ENCODE measurements at regions of chr11 and their contacts with region 1.

Region 1: DNA sequence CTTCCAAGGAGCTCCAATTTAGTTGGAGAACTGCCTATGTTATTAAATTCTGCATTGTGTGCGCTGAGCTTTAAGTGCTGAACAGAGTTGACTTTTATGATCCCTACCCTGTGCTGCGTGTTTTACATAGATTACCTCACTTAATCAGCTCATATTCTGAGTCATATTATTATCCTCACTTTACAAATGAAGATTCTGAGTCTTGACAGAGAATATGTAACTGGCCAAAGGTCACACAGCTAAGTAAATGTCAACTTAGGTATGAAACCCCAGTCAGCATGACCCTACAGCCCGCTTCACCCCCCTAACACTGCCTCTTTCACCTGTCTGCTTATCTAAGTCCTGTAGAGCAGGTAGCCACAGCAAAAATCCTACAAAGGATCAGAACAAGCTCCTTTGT is 19.8 kb upstream of the TMPRSS5 start:
- DNase-seq: no peak

Region 2: DNA sequence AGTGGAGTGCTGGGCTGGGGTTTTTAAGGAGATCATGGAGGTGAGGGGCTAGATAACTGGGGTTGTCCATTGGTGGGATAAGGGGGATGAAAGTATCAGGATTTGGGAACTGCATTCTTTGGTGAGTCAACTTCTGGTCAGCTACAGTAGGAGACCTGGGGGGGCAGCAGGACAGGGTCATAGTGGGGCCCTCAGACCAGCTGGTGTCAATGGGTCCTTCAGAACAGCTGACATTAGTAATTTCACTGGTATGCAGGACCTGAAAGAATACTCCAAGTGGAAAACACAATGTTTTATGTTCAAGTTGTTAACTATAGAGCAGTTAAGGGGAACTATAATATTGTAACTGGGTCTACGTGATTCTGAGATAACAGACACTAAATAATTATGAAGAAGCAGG is 414.4 kb before region 1 on chr11:
- intact Hi-C with region 1: loop called (anchors 2 to 5 kb)
- DNase-seq: no peak

Region 3: DNA sequence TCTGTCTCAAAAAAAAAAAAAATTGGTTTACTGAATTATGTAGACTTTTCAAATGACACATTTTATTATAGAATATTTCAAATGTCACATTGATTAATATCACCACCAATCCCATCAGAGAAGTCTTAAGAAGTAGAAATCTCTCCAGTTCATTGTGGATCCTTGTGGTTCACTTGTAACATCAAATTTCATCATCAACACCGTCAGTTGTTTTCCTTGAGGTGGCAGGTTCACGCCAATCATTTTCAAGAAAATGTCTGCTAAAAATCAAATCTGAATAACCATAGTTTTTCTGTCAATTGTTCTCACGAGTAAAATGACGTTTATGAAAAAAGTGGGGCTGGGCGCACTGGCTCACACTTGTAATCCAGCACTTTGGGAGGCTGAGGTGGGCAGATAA is 70.1 kb before region 1 on chr11:
- intact Hi-C with region 1: no loop called
- DNase-seq: no peak

Region 4: DNA sequence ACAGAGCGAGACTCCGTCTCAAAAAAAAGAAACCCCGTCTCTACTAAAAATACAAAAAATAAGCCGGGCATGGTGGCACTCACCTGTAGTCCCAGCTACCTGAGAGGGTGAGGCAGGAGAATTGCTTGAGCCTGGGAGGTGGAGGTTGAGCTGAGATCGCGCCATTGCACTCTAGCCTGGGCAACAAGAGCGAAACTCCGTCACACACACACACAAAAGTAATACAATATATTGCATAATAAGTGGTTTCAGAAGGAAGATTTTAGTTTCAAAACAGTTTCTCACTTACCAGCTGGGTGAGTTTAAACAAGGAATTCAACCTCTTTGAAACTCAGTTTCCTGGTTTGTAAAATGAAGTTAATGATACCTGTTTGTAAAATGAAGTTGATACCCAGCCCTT is 216.3 kb after region 1 on chr11:
- intact Hi-C with region 1: no loop called
- DNase-seq: no peak